ENCODE measurements at regions of chr9 and their contacts with region 1.

Region 1: GRCh38 chr9:84557751-84558150 is 111.8 kb upstream of the NTRK2 start:
- DNase-seq: peak; percentile 51
- H3K4me3 ChIP-seq: no peak overlapping the region
- H3K27ac ChIP-seq: no peak overlapping the region
- H3K4me1 ChIP-seq: peaks cover 9% of the 10 kb centered on the region
- H3K27me3 ChIP-seq: no peaks in the 10 kb centered on the region
- CTCF ChIP-seq: no peak

Region 2: GRCh38 chr9:84238652-84239051 is 319.1 kb before region 1 on chr9:
- CTCF ChIA-PET with region 1: no interaction called
- dilution Hi-C with region 1: no loop called
- in situ Hi-C with region 1: no loop called
- intact Hi-C with region 1: no loop called
- DNase-seq: peak; percentile 15
- H3K4me3 ChIP-seq: no peak overlapping the region
- H3K27ac ChIP-seq: peak overlapping the region; percentile 48
- H3K4me1 ChIP-seq: peaks cover 11% of the 10 kb centered on the region
- H3K27me3 ChIP-seq: no peaks in the 10 kb centered on the region
- CTCF ChIP-seq: peak; percentile 25 to 37

Region 3: DNA sequence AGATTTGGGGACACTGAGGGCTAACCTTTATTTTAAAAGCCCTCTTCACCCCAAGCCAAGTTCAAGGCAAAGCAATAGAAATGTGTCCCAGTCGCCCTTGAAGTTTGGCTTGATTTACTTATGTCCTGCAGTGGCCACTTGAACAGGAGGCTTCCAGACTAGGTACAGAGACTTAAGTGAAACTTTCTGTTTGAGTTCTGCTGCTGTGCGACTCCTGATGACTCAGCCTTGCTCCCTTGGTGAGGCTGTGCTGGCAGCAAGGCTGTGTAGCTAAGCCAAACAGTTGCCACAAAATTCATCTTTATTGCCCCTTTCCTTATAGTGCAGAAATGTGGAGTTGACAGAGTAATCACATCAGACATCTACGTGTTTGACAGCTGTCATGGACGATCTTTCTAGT is 43.0 kb after region 1 on chr9:
- CTCF ChIA-PET with region 1: interaction called, 14 read pairs
- dilution Hi-C with region 1: no loop called
- in situ Hi-C with region 1: no loop called
- intact Hi-C with region 1: no loop called
- DNase-seq: no peak
- H3K4me3 ChIP-seq: no peak overlapping the region
- H3K27ac ChIP-seq: no peak overlapping the region
- H3K4me1 ChIP-seq: no peaks in the 10 kb centered on the region
- H3K27me3 ChIP-seq: no peaks in the 10 kb centered on the region
- CTCF ChIP-seq: no peak

Measured in mammary epithelial cell (primary cell).